Heart left ventricle (tissue), 16 donors: ENCODE measurements at regions of chr4 and their contacts with region 1.

Region 1: DNA sequence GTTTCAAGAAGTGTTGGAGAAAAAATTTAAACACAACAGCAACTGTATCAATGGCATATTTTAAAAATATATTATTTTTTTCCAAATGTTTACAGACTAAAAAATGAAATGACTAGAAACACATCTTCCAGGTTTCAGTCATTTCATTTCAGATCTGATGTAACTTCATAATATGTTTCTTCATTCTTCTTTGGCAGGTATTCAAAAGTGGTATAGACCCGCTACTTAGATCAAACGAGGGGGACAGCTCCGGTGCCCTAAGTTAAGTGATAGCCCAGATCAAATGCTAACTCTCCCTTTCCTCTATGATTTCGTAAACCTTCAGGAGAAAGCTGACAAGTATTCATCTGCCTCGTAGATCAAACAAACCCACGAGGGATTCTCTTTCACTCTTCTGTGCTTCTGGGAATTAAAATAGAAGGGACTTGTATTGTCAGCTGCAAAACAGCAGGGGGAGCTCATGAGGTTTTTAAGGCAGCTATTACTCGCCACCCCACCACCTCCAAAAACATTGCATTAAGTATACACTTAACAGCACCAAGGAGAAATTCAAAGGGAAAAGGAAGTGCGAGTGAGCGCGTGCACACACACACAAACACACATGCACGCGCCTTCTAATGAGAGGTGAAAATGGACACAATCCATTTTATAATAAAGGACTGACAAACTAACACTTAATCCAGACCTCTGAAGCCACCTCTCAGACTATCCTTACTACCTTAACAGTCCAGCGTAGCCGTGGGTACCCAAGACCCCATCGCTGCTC is 21.4 kb downstream of the HELT start:
- DNase-seq: peak in 2 of 5 donors; percentile 40 to 50
- ATAC-seq: peak in 3 of 4 donors; percentile 64 to 85 (median 66)
- H3K4me3 ChIP-seq: peak overlapping the region in 1 of 12 donors; percentile 19
- H3K27ac ChIP-seq: no peak overlapping the region
- H3K4me1 ChIP-seq: peaks cover 0 to 9% (median 0%) of the 10 kb centered on the region in 12 donors
- H3K27me3 ChIP-seq: peaks cover 0 to 5% (median 0%) of the 10 kb centered on the region in 9 donors
- CTCF ChIP-seq: peak; percentile 66 to 89 (median 82)
- POLR2A ChIP-seq: no peak

Region 2: GRCh38 chr4:185096032-185096653 is 56.5 kb after region 1 on chr4:
- intact Hi-C with region 1: loop called (anchors 1 to 5 kb)
- DNase-seq: peak in 1 of 5 donors; percentile 32
- ATAC-seq: no peak
- H3K4me3 ChIP-seq: no peak overlapping the region
- H3K27ac ChIP-seq: no peak overlapping the region
- H3K4me1 ChIP-seq: peaks cover 0 to 4% (median 0%) of the 10 kb centered on the region in 12 donors
- H3K27me3 ChIP-seq: no peaks in the 10 kb centered on the region
- CTCF ChIP-seq: peak; percentile 42 to 83 (median 64)
- POLR2A ChIP-seq: no peak

Region 3: DNA sequence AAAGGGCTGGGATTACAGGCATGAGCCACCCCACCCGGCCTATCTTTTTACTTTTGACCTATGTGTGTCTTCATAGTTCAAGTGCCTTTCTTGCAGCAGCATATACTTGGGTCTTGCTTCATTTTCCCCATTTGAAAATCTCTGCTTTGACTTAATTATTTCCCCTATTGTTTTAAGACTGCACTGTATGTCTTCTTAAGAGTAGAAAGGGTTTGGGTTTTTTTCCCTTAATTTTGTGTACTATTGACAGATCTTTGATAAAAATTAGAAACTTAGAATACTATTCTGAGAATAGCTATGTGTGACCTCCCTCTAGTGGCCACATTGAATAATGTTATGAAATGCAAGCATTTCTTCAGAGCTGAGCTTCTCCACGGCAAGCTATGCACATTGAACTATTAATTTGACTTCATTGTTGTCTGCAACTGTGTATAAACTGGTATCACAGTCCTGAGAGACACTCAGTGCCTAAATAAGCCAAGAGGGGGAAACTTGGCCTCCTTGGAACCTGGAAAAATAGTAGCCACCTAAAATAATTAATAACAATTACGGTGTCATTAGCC is 94.7 kb after region 1 on chr4:
- intact Hi-C with region 1: loop called (anchors 1 to 5 kb)
- DNase-seq: no peak
- ATAC-seq: peak in 3 of 4 donors; percentile 39 to 47 (median 43)
- H3K4me3 ChIP-seq: no peak overlapping the region
- H3K27ac ChIP-seq: no peak overlapping the region
- H3K4me1 ChIP-seq: peaks cover 0 to 24% (median 9%) of the 10 kb centered on the region in 12 donors
- H3K27me3 ChIP-seq: no peaks in the 10 kb centered on the region
- CTCF ChIP-seq: peak; percentile 70 to 89 (median 80)
- POLR2A ChIP-seq: no peak

Region 4: DNA sequence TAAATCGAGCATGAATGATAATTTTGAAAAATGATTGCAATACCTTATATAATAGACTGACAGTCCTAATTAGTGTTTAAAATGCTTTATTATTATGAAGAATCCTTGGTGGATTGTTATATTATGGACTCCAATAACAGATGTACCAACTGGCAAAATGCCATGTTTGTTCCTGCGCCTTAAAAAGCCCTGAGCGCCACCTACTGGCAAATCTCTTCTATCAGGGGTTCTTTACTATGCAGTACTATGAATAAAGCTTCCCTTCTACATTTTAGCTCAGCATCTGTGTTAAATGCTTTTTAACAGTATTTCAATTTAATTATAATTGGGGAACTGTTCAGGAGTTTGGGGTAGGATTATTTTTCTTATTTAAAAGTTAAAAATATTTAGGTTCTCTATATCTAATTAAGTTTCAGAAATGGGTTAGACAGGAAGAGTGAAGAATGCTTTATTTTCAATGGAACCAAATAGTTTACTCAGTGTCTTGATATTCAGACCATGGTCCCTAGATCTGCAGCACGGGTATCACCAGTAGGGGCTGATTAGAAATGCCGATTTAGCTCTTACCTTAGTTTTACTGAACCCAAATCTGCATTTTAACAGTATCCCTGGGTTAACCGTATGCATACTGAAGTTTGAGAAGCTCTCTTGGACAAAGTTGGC is 144.1 kb after region 1 on chr4:
- intact Hi-C with region 1: loop called in 8 of 10 experiments (anchors 1 to 10 kb)
- DNase-seq: peak; percentile 64 to 91 (median 85)
- ATAC-seq: peak in 3 of 4 donors; percentile 37 to 78 (median 77)
- H3K4me3 ChIP-seq: no peak overlapping the region
- H3K27ac ChIP-seq: no peak overlapping the region
- H3K4me1 ChIP-seq: peaks cover 0 to 5% (median 0%) of the 10 kb centered on the region in 12 donors
- H3K27me3 ChIP-seq: no peaks in the 10 kb centered on the region
- CTCF ChIP-seq: peak; percentile 73 to 96 (median 88)
- POLR2A ChIP-seq: no peak

Region 5: DNA sequence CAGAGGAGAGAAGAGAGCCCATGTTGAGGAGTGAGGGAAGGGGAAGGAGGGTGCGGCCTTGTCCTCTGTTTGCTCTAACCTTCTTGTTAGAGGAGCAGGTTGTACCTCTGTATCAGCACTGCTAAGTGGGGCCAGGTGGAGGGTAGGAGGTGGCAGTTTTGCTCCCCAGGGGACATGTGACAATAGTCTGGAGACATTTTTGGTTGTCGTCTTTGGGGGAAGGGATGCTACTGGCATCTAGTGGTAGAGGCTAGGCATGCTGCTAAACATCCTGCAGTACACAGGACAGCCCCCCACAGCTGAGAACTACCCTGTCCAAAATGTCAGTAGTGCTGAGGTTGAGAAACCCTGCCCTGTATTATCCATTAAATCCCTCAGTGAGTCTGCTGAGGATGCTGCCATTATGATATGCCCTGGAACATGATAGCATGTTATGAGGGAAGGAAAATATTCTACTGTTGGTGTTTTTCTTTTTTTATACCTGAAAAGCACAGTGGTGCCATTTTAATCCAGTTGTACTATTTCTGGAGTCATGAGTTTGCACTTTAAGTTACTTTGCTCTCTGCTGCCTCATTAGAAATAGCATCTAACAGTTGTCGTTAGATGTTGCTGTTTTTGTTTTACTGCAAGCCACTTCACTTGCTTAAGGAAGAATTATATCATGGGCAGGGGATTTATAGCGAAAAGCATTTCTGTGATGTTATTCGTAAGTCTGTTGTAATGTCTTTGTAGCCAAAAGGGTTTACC is 265.4 kb after region 1 on chr4:
- intact Hi-C with region 1: loop called in 2 of 10 experiments (anchors 5 to 10 kb)
- DNase-seq: no peak
- ATAC-seq: peak; percentile 35 to 82 (median 55)
- H3K4me3 ChIP-seq: no peak overlapping the region
- H3K27ac ChIP-seq: no peak overlapping the region
- H3K4me1 ChIP-seq: peaks cover 0 to 8% (median 0%) of the 10 kb centered on the region in 12 donors
- H3K27me3 ChIP-seq: no peaks in the 10 kb centered on the region
- CTCF ChIP-seq: peak in 11 of 12 donors; percentile 23 to 61 (median 43)
- POLR2A ChIP-seq: no peak